Gastrocnemius medialis (tissue), 4 donors: ENCODE measurements at regions of chr3 and their contacts with region 1.

Region 1: GRCh38 chr3:196023947-196024346 is 57.9 kb downstream of the TFRC start:
- DNase-seq: no peak
- ATAC-seq: no peak
- H3K4me3 ChIP-seq: no peak overlapping the region
- H3K27ac ChIP-seq: no peak overlapping the region
- H3K4me1 ChIP-seq: no peaks in the 10 kb centered on the region
- H3K27me3 ChIP-seq: no peaks in the 10 kb centered on the region
- CTCF ChIP-seq: no peak
- POLR2A ChIP-seq: no peak

Region 2: DNA sequence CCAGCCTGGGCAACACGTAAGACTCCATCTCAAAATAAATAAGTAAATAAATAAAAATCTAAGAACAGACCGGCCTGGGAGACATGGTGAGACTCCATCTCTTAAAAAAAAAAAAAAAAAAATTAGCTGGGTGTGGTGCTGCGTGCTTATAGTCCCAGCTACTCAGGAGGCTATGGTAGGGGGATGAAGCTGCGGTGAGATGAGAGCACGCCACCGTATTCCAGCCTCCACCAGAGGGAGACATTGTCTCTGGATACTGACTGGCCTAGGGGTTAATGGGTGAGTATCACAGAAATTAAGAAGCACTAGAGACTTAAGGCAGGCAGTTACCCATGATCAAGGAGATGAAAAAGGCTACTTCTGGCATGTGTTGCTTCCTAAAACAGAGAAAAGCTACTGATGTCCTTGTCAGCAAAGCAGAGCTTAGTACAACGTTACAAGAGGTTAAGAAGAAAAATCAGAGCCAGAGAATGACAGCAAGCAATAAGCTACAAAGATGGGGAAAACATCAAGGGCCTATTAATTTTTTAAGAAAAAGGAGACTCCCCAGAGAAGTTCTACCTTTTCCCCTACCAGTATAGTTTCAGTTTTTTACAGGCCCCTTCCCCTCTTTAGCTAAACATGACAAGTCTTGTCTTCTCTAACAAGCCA is 49.4 kb after region 1 on chr3:
- in situ Hi-C with region 1: no loop called
- intact Hi-C with region 1: no loop called
- DNase-seq: peak; percentile 23 to 52
- ATAC-seq: peak; percentile 90 to 95
- H3K4me3 ChIP-seq: no peak overlapping the region
- H3K27ac ChIP-seq: peak overlapping the region in 1 of 4 donors; percentile 38
- H3K4me1 ChIP-seq: peaks cover 0 to 10% of the 10 kb centered on the region in 2 donors
- H3K27me3 ChIP-seq: no peaks in the 10 kb centered on the region
- CTCF ChIP-seq: peak; percentile 73 to 84 (median 81)
- POLR2A ChIP-seq: no peak

Region 3: DNA sequence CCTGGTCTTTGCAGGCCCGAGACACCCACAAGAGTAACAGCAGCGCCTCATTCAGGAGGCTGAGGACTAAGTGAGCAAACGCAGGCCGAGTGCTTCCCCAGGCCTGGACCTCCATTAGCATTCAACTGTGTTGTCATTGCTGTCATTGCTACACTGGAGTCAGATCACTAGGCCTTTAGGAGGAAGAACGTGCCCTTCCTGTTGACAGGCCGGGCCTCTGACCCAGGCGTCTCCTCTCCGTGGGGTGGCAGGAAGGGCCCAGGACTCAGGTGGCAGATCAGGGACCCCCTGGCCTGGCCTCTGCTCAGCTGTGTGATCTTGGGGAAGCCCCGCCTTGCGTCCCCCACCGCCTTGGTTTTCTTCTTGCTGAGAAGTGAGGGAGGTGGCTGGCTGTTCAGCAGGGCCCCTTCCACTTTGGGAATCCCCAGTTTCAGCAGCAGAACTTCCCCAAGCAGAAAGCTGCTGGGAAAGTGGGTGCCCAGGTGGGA is 168.1 kb after region 1 on chr3:
- in situ Hi-C with region 1: no loop called
- intact Hi-C with region 1: loop called (anchors 1 kb)
- DNase-seq: no peak
- ATAC-seq: peak in 1 of 2 donors; percentile 22
- H3K4me3 ChIP-seq: no peak overlapping the region
- H3K27ac ChIP-seq: peak overlapping the region; percentile 65 to 84 (median 73)
- H3K4me1 ChIP-seq: peaks cover 14 to 20% of the 10 kb centered on the region in 2 donors
- H3K27me3 ChIP-seq: no peaks in the 10 kb centered on the region
- CTCF ChIP-seq: no peak
- POLR2A ChIP-seq: no peak